Activated CD4-positive, alpha-beta T cell treated with anti-CD3 and anti-CD28 coated beads, Interleukin-2, amount 10 ng/mL, durations not matched to agents 24 days and 14 days (primary cell): ENCODE measurements at regions of chr13 and their contacts with region 1.

Region 1: DNA sequence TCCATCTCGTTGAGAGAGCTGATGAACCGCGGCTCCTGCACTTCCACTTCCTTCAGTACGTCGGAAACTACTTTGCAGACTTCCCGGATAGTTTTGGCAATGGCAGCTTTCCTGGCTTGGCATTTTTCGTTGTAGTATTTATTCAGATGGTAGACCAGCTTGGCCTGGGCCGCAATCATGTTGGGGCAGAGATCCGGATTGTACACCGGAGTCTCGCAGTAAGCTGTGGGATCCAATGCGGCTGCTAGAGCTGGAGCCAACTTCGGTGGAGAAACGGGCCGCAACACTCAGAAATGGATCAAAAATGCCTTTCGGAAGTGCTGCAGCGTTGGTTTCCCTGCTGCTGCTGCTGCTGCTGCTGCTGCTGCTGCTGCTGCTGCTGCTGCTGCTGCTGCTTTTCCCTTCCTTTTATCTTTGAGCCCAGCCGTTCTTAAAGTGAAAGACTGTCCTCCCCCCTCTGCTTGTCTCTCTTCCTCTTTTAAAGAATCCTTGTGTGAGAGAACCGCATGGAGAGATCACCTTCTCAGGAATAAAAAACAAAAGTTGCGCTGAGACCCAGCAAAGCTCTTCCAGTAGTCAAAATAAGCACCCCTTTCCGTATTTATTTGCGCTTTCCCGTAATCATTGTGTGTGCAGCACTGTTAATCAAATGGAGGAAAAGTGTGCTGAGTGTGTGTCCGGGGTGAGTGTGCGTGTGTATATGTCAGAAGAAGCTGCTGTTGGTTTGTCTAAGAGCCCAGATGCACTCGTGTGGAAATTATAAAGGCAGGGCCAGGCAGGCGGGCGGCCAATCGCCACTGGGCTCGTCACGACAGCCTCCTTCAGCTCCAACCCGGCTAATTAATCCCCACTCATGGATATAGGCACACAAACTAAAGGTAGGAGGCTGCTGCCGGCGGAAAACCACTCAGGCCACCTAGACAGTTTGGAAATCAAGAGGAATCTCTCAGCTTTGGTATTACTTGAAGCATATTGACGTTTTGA is at the start of gene MAB21L1:
- DNase-seq: peak; percentile 69
- H3K4me3 Mint-ChIP-seq: peak within 1 kb of the TSS; percentile 76
- H3K27ac Mint-ChIP-seq: peak within 1 kb of the TSS; percentile 75
- H3K4me1 Mint-ChIP-seq: peaks cover 26% of the 10 kb centered on the region
- H3K27me3 Mint-ChIP-seq: peaks cover 77% of the 10 kb centered on the region
- total RNA-seq, gene MAB21L1: not detected in 2 replicates

Region 2: DNA sequence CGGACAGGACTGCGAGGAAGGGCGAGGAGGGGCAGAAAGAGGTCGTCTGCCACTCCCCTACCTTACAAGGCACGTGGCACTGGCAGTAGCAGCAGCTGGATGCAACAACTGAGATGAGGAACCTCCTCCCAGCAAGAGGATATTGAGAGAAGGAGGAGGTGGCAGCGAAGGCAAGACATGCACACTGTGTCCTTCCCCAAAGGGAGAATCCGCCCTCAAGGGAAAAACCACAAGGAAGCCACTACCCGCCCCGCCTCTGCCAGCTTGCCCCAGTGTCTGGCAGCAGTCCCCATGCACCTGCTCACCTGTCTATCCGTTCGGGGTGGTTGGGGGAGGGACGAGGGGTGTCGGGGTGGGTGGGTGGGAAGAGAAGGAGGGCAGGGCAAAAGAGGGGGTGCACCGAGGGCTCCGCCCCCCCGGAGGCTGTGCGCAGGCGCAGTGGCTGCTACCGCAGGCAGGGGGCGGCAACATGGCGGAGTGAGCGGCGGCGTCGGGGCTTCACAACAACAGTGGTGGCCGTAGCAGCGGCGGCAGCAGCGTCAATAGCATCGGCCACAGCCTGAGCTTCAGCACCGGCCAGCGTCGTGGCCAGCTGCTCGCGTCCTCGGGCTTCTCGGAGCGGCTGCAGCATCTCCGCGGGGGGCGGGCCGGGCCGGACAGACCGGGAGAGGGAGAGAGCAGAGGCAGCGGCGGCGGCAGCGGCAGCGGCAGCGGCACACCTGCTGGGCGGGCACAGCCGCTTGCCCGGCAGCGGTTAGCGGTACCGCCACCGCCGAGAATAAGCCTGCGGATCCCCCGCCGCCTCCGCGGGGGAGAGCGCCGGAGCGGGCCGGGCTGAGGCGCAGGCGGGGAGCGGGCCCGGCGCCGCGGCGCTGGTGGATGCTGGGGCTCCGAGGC is 534.2 kb before region 1 on chr13 and contains the start of gene NBEA:
- intact Hi-C with region 1: loop called (anchors 10 kb)
- DNase-seq: peak; percentile 92
- H3K4me3 Mint-ChIP-seq: peak within 1 kb of the TSS; percentile 91
- H3K27ac Mint-ChIP-seq: peak within 1 kb of the TSS; percentile 67
- H3K4me1 Mint-ChIP-seq: peaks cover 14% of the 10 kb centered on the region
- H3K27me3 Mint-ChIP-seq: peaks cover 48% of the 10 kb centered on the region
- total RNA-seq, gene NBEA: 0.07 and 0.14 TPM in 2 replicates

Region 3: GRCh38 chr13:35039012-35039411 is 437.2 kb before region 1 on chr13:
- intact Hi-C with region 1: no loop called
- DNase-seq: no peak
- H3K4me3 Mint-ChIP-seq: no peak overlapping the region
- H3K27ac Mint-ChIP-seq: no peak overlapping the region
- H3K4me1 Mint-ChIP-seq: no peaks in the 10 kb centered on the region
- H3K27me3 Mint-ChIP-seq: no peaks in the 10 kb centered on the region

Region 4: GRCh38 chr13:36107521-36108107 is 631.4 kb after region 1 on chr13:
- intact Hi-C with region 1: no loop called
- DNase-seq: no peak
- H3K4me3 Mint-ChIP-seq: no peak overlapping the region
- H3K27ac Mint-ChIP-seq: no peak overlapping the region
- H3K4me1 Mint-ChIP-seq: no peaks in the 10 kb centered on the region
- H3K27me3 Mint-ChIP-seq: no peaks in the 10 kb centered on the region